K562 (cell line): ENCODE measurements at regions of chr11 and their contacts with region 1.

Region 1: GRCh38 chr11:126440792-126441514 is 85.5 kb downstream of the ST3GAL4 start:
- DNase-seq: peak; percentile 87 to 96 (median 94)
- ATAC-seq: peak; percentile 96
- H3K4me3 ChIP-seq: no peak overlapping the region
- H3K27ac ChIP-seq: no peak overlapping the region
- H3K4me1 ChIP-seq: peaks cover 0 to 4% of the 10 kb centered on the region in 2 experiments; a peak in 4 of 5 replicates
- H3K27me3 ChIP-seq: peaks cover 4 to 42% of the 10 kb centered on the region in 2 experiments; a peak in 3 of 5 replicates
- CTCF ChIP-seq: peak; percentile 89 to 91 (median 90)
- EP300 ChIP-seq: no peak
- POLR2A ChIP-seq: no peak
- RAD21 ChIP-seq: peak; percentile 91 to 95

Region 2: GRCh38 chr11:126310228-126310991 is 130.5 kb before region 1 on chr11:
- CTCF ChIA-PET with region 1: interaction called, 5 read pairs
- POLR2A ChIA-PET with region 1: no interaction called
- in situ Hi-C with region 1: no loop called
- intact Hi-C with region 1: loop called (anchors 1 kb)
- DNase-seq: peak; percentile 72 to 83 (median 74)
- ATAC-seq: peak; percentile 98
- H3K4me3 ChIP-seq: no peak overlapping the region
- H3K27ac ChIP-seq: no peak overlapping the region
- H3K4me1 ChIP-seq: no peaks in the 10 kb centered on the region
- H3K27me3 ChIP-seq: no peaks in the 10 kb centered on the region; a peak in 1 of 5 replicates
- CTCF ChIP-seq: peak; percentile 85 to 96 (median 92)
- EP300 ChIP-seq: no peak
- POLR2A ChIP-seq: no peak
- RAD21 ChIP-seq: peak; percentile 95 to 99

Region 3: DNA sequence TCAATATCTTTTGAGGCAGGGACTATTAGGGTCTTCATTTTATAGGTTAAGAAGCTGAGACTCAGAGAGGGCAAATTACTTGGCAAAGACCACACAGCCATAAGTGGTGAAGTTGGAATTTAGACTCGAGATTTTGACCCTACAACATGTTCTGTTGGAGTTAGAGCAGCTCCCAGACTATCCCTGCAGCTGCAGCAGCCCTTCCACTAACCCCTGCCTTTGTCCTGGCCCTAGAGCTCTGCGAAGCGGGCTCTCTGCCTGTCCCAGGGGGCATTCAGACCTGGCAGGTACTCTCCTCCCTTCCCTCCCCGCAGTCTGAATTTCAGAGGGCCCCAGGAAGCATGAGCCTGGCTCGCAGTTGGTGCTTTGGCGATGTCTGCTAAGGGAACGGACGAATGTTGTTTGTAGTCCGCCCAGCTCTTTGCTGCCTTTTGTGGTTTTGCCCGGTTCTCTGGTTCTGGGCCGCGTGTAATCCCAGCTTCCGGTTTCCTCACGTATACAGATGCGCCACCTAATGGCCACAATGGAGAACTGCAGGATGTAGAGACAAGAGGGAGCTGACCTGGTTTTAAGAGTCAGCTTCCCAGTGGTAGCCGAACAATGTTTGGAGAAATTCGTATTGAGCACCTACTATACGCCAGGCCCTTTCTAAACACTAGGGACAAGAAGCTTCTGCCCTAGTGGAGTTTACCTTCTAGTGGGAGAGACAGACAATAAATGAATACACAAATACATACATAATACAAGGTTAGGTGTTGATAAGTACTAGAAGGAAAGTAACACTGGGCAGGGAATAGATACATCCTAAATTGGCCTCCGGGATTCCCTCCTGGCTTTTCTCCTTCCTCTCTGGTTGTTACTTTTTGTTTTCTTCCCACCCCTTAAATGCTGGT is 39.7 kb after region 1 on chr11:
- CTCF ChIA-PET with region 1: interaction called, 6 read pairs
- POLR2A ChIA-PET with region 1: interaction called, 8 read pairs
- in situ Hi-C with region 1: no loop called
- intact Hi-C with region 1: loop called (anchors 2 kb)
- DNase-seq: peak; percentile 86 to 89 (median 87)
- ATAC-seq: peak; percentile 86
- H3K4me3 ChIP-seq: no peak overlapping the region
- H3K27ac ChIP-seq: peak overlapping the region; percentile 60; the same call in 1 of the 3 replicates
- H3K4me1 ChIP-seq: peaks cover 3 to 4% of the 10 kb centered on the region in 2 experiments; a peak in 2 of 5 replicates
- H3K27me3 ChIP-seq: peaks cover 5 to 42% of the 10 kb centered on the region in 2 experiments; a peak in 4 of 5 replicates
- CTCF ChIP-seq: peak; percentile 86 to 96 (median 93)
- EP300 ChIP-seq: no peak; the same call in 1 of the 2 replicates
- POLR2A ChIP-seq: no peak
- RAD21 ChIP-seq: peak; percentile 74 to 76

Region 4: GRCh38 chr11:126989942-126990715 is 549.2 kb after region 1 on chr11:
- CTCF ChIA-PET with region 1: no interaction called
- POLR2A ChIA-PET with region 1: no interaction called
- in situ Hi-C with region 1: no loop called
- intact Hi-C with region 1: loop called (anchors 1 kb)
- DNase-seq: peak; percentile 56 to 81 (median 72)
- ATAC-seq: peak; percentile 99
- H3K4me3 ChIP-seq: no peak overlapping the region
- H3K27ac ChIP-seq: no peak overlapping the region
- H3K4me1 ChIP-seq: no peaks in the 10 kb centered on the region
- H3K27me3 ChIP-seq: peaks cover 0 to 8% of the 10 kb centered on the region in 2 experiments; a peak in 2 of 5 replicates
- CTCF ChIP-seq: peak; percentile 83 to 89 (median 84)
- EP300 ChIP-seq: no peak
- POLR2A ChIP-seq: no peak
- RAD21 ChIP-seq: peak; percentile 71 to 81

Region 5: GRCh38 chr11:127345819-127346459 is 905.0 kb after region 1 on chr11:
- CTCF ChIA-PET with region 1: no interaction called
- POLR2A ChIA-PET with region 1: interaction called, 4 read pairs
- in situ Hi-C with region 1: no loop called
- intact Hi-C with region 1: loop called (anchors 5 kb)
- DNase-seq: peak; percentile 8 to 20 (median 15)
- ATAC-seq: no peak
- H3K4me3 ChIP-seq: no peak overlapping the region
- H3K27ac ChIP-seq: no peak overlapping the region
- H3K4me1 ChIP-seq: no peaks in the 10 kb centered on the region
- H3K27me3 ChIP-seq: no peaks in the 10 kb centered on the region
- CTCF ChIP-seq: peak; percentile 15 to 45 (median 43); a peak in 2 of 6 replicates
- EP300 ChIP-seq: no peak
- POLR2A ChIP-seq: no peak
- RAD21 ChIP-seq: peak; percentile 32 to 43; a peak in 3 of 4 replicates